H1 (cell line): ENCODE measurements at regions of chr12 and their contacts with region 1.

Region 1: GRCh38 chr12:30746190-30746589 is 8.6 kb downstream of the CAPRIN2 start:
- DNase-seq: no peak
- H3K4me3 ChIP-seq: no peak overlapping the region
- H3K27ac ChIP-seq: no peak overlapping the region
- H3K4me1 ChIP-seq: no peaks in the 10 kb centered on the region; a peak in 5 of 7 replicates
- H3K27me3 ChIP-seq: no peaks in the 10 kb centered on the region
- CTCF ChIP-seq: no peak
- EP300 ChIP-seq: no peak
- POLR2A ChIP-seq: no peak
- RAD21 ChIP-seq: no peak

Region 2: DNA sequence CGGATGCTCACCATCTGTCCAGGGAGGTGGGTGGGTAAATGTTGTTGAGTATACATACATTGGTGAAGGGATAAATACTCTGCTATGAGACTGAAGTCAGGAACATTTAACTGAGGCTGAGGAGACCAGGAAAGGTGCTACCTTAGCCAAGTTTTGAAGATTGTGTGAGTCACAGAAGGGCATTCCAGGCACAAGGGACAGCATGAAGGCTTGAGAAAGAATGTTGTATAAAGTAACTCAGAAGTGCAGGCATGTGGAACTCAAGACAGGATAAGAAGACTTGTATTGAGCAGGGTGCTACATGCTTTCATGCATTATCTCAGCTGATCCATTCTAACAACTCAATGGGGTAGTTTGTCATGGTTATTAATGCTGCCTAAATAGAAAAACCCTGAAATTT is 163.2 kb before region 1 on chr12:
- CTCF ChIA-PET with region 1: no interaction called
- POLR2A ChIA-PET with region 1: no interaction called
- DNase-seq: no peak
- H3K4me3 ChIP-seq: no peak overlapping the region
- H3K27ac ChIP-seq: no peak overlapping the region
- H3K4me1 ChIP-seq: no peaks in the 10 kb centered on the region
- H3K27me3 ChIP-seq: no peaks in the 10 kb centered on the region
- CTCF ChIP-seq: no peak
- EP300 ChIP-seq: no peak
- POLR2A ChIP-seq: no peak
- RAD21 ChIP-seq: no peak

Region 3: GRCh38 chr12:30725739-30726138 is 20.5 kb before region 1 on chr12:
- CTCF ChIA-PET with region 1: interaction called, 11 read pairs
- POLR2A ChIA-PET with region 1: interaction called, 4 read pairs
- DNase-seq: no peak
- H3K4me3 ChIP-seq: no peak overlapping the region
- H3K27ac ChIP-seq: no peak overlapping the region
- H3K4me1 ChIP-seq: no peaks in the 10 kb centered on the region
- H3K27me3 ChIP-seq: no peaks in the 10 kb centered on the region
- CTCF ChIP-seq: no peak
- EP300 ChIP-seq: no peak
- POLR2A ChIP-seq: no peak
- RAD21 ChIP-seq: no peak